ENCODE measurements at regions of chr14 and their contacts with region 1.

Region 1: GRCh38 chr14:77053046-77053841 is 24.7 kb upstream of the IRF2BPL start:
- DNase-seq: no peak
- H3K4me3 ChIP-seq: no peak overlapping the region
- CTCF ChIP-seq: peak; percentile 92

Region 2: GRCh38 chr14:76882651-76883050 is 170.6 kb before region 1 on chr14:
- CTCF ChIA-PET with region 1: interaction called, 105 read pairs
- POLR2A ChIA-PET with region 1: no interaction called
- DNase-seq: no peak
- H3K4me3 ChIP-seq: no peak overlapping the region
- CTCF ChIP-seq: no peak

Region 3: DNA sequence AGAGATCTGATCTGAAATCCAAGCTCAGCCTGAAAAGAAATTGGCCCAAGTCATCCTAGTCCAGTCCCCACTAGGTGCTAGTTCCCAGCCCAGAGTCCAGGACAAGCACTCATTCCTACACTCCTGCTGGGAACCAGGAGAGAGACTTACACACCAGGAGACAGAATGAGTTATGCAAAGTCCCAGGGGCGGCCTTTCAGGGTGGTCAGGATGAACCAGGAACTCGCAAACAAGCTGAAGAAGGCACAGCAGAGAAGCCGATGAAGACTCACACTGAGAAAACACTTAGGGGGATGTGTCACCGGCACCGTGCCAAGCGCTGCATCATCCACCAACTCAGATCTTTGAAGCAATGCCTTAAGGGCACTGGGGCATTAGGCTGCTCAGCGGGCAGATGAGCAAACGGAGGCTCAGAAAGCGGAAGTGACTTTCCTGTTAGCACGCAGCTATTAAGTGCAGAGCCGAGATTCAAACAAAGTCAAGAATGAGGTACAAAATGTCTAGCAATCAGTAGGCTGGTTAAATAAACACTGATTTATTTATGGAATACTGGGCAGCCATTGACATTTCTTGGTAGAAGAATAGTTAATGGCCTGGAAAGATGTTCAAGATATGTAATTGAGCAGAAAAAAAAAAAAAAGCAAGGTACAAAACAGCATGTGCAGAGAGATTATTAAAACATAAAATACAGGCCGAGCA is 148.4 kb before region 1 on chr14:
- CTCF ChIA-PET with region 1: interaction called, 1,142 read pairs
- POLR2A ChIA-PET with region 1: no interaction called
- DNase-seq: peak; percentile 92
- H3K4me3 ChIP-seq: no peak overlapping the region; the same call in none of the 2 replicates
- CTCF ChIP-seq: no peak

Region 4: GRCh38 chr14:76924371-76925096 is 128.7 kb before region 1 on chr14:
- CTCF ChIA-PET with region 1: interaction called, 1,142 read pairs
- POLR2A ChIA-PET with region 1: no interaction called
- DNase-seq: no peak
- H3K4me3 ChIP-seq: no peak overlapping the region
- CTCF ChIP-seq: no peak

Region 5: DNA sequence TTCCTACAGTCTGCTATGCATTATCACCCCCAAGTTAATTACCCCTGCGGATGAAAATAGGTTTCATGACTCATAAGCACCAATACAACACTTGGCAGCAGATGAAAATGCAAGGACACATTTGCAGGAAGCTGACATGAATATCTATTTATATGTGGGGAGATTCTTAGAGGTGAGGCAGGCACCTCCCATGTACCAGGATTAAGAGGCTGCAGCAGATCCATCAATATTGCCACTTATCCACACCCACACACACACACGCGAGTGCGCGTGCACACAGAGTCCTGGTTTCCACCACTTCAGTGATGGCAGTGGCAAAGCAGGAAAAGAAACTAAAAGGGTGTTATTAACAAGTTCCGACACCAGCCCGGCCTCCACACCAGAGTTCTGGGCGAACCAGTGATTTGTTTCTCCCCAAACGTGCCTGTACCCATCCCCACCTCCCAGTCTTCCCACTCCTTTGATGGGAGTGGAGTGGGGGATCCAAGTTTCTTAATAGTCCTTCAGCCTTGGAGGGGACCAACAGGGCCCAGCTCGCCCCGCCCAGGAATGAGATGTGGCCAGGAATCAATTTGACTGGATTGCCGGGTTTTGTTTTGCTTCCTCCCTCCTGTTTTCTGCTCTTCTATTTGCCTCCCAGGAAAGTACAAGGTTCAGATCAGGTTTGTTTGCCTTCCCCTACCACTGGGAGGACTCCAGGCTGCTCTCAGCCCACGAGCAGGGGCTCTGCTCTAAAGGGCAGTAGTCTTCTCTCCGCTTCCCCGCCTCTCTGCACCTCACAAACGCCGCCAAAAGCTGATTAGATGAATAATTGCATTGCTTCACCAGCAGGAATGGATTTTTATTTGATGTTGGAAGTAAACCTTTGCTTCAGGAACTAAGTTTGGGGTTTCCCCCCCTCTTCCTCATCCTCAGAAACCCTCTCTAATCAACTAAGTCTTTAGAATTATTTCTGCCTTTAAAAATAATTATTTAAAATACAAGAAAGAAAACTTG is 29.9 kb before region 1 on chr14:
- CTCF ChIA-PET with region 1: interaction called, 33 read pairs
- POLR2A ChIA-PET with region 1: no interaction called
- DNase-seq: no peak
- H3K4me3 ChIP-seq: peak overlapping the region; percentile 92
- CTCF ChIP-seq: peak; percentile 36

Region 6: DNA sequence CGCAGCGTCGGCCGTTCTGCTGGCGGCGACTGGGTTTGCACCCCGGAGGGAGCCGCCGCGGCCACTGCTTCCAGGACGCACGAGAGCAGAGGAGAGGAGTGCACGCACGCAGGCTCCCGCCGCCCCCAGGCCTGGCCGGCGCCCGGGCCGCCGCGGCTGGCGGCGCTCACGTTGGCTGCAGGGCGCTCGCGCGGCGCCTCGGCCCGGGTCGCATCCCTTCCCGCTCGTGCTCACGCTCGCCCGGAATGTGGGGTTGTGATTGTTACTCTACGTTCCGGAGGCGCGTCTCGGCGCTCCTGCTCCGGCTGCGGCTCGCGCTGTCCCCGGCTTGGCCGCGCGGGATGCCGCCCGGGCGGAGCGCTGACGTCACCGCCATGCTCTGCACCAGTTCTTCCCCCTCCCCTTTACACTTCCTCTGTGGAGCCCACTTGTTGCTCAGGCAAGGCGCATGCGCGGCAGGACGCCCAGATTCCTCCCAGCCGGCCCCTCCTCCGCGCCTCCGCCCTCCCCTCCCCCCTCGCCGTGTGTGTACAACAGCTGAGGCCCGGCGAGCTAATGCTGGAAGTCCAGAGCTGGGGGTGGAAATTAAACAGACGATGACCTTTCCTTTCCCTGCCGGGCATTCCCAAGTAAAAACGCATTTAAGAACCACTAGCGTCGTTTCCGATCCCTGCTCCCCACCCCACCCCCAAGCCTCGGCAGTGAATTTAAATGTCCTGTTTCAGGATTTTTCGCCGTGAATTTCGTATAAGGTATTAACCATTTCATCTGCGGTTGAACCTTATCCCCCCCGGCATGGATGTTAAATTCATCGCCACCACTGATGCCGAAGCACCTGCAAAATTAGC is 24.6 kb before region 1 on chr14 and contains the start of gene IRF2BPL:
- CTCF ChIA-PET with region 1: interaction called, 33 read pairs
- POLR2A ChIA-PET with region 1: no interaction called
- DNase-seq: peak; percentile 92
- H3K4me3 ChIP-seq: peak within 1 kb of the TSS; percentile 92
- CTCF ChIP-seq: no peak

Region 7: DNA sequence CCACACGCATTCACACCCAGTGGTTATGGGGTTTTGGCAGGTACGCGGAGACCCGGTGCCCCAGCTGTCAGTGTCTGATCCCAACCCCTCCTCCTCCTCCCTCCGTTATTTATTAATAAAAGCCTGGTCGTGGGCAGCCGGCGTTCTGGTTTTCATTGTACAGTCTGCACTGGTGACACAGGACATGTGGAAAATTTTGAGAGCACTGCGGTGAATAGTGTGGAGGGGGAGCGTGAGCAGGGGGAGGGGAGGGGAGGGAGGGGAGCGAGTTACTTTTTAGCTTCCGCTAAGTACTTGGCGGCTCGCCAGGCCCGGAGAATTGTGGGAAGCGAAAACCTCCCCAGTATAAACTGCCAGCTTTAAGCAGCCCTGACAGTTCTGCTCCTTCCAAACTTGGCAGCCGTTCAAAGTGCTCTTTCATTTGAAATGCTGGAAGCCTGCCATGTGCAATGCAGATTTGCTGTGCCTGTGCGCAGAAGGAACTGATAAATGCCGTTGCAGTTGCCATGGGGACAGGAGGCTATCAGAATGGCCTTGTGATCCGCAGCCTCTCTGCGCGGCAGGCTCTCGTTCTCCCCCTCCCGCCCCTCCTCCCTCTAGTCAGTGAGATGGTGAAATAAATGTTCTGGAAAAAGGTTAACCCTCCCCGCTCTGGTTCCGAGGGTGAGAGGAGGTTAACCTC is 13.0 kb before region 1 on chr14:
- CTCF ChIA-PET with region 1: interaction called, 58 read pairs
- POLR2A ChIA-PET with region 1: no interaction called
- DNase-seq: peak; percentile 90
- H3K4me3 ChIP-seq: peak overlapping the region; percentile 42
- CTCF ChIP-seq: no peak

Measured in AG04449 (cell line).